Sciatic nerve (tissue), 2 donors: ENCODE measurements at regions of chr15 and their contacts with region 1.

Region 1: DNA sequence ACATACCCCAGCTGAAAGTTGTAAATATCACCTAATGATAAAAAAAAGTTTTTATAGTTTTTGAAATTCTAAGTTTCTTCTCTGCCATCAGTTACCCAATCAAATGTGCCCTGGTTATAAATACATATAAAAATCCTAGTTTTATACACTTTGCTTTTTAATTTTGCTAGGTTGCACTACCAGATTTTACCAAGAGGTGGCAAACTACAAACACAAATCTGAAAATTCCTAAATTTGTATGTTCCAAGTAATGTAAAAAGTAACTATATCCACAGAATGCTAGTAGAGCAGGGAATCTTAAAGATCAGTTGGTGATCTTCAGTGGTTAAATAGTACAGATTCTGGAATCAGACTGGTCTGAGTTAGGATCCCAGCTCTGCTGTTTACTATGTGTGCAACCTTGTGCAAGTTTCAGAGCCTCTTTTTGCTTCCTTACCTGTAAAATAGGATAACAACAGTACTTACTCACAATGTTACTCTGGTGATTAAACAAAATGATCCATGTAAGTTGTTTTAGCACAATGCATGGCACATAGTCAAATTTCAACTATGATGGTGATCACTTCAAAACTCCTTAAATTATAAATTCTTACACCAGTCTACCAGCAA is 11.0 kb downstream of the TRPM7 start:
- DNase-seq: no peak
- ATAC-seq: no peak

Region 2: DNA sequence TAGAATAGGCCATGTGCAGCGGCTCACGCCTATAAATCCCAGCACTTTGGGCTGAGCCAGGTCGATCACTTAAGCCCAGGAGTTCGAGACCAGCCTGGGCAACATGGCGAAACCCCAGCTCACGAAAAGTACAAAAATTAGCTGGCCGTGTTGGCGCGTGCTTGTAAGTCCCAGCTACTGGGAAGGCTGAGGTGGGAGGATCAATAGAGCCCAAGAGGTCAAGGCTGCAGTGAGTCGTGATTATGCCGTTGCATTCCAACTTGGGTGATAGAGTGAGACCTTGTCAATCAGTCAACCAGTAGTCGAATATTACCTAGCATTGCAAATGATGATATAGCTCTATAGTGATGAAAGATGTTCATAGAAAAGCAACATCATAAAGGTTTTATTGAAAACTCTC is 199.5 kb before region 1 on chr15:
- intact Hi-C with region 1: no loop called
- DNase-seq: no peak
- ATAC-seq: no peak

Region 3: DNA sequence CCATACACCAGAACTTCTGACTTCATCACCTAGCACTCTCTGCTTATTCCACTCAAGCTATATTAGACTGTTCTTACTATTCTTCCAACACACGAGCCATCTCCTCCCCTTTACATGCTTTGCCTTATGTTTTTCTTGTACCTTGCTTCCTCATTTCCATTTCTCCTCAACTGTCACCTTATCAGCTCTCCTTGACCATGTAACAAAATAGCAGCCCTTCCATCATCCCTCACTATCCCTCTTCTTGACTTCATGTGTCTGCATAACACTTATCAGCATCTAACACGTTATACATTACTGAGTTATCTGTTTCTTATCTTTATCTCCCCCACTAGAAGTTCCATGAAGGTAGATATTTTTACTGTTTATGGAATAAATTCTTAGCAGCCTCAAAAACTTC is 34.4 kb before region 1 on chr15:
- intact Hi-C with region 1: no loop called
- DNase-seq: no peak
- ATAC-seq: no peak

Region 4: DNA sequence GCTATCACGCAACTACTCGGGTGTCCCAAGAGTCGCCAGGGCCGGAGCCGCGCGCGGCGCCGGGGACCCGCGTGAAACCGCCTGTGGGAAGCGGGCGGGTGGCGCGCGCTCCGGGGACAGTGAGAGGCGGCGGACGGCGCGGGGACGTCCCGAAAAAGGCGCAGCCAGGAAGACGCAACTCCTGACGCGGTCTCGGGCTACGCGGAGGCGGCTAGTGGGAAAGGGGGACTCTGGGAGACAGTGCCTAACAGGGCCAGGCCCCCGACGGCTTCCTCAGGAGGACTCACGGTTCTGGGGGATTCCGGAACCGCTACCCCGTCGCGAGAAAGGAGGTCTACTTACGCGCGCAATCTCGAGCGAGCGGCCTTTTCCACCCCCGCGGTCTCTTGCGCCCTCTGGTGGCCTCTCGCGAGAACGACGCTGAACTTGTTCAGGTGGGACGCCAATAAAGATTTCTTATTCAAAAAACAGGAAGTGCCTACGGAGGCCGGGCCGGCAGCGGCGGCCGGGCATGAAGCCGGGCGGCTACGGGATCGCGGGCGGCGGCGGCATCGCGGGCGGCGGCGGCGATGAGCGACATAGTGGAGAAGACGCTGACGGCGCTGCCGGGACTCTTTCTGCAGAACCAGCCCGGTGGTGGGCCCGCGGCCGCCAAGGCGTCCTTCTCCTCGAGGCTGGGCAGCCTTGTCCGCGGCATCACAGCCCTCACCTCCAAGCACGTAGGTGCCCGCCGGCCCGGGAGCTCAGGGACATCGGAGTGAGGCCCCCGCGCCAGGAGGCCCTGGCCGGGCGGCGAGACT is 232.8 kb after region 1 on chr15 and contains the start of gene AP4E1:
- intact Hi-C with region 1: loop called (anchors 10 kb)
- DNase-seq: peak; percentile 96
- ATAC-seq: peak; percentile 88
- total RNA-seq, gene AP4E1: 11.9 TPM